ENCODE measurements at regions of chr3 and their contacts with region 1.

Region 1: DNA sequence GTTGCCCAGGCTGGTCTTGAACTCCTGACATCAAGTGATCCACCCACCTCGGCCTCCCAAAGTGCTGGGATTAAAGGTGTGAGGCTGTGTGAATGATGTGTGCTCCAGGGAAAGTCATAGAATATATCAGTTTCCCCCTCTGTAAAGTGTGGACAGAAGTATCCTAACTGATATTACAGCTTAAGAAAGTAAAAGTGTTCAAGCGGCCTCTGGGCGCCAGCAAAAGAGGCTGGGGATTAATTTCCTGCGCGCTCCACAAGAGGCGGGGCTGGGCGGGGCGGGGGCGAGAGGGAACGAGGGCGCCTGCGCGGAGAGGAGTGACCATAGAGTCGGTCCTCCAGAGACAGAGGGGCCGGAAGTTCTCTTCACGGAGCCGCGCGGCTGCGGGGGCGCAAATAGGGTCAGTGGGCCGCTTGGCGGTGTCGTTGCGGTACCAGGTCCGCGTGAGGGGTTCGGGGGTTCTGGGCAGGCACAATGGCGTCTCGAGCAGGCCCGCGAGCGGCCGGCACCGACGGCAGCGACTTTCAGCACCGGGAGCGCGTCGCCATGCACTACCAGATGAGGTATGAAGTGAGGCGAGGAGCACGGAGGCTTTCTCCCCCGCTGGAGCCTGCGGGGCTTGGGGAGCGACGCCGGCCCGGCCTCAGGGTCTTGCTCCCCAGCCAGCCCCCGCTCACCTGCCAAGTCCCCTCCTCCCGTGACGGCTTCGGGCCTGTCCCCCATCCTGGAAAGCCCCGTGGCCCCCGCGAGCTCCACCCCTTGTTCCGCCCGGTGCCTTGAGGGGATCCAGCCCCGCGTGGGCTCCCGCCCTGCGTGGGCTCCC is at the start of gene JAGN1:
- DNase-seq: peak; percentile 62
- ATAC-seq: peak; percentile 90
- H3K4me3 ChIP-seq: peak within 1 kb of the TSS; percentile 80
- H3K27ac ChIP-seq: peak within 1 kb of the TSS; percentile 98
- H3K4me1 ChIP-seq: no peaks in the 10 kb centered on the region
- H3K27me3 ChIP-seq: no peaks in the 10 kb centered on the region
- CTCF ChIP-seq: peak in 2 of 3 experiments; percentile 4 to 28; a peak in 1 of 6 replicates
- EP300 ChIP-seq: 0 out of 4 replicates have a peak, but pooled peaks of 1 of the 2 experiments have one; percentile 7
- POLR2A ChIP-seq: peak; percentile 95
- RAD21 ChIP-seq: no peak
- polyA plus RNA-seq, gene JAGN1: 26.2 to 28.6 TPM

Region 2: GRCh38 chr3:9878700-9879099 is 11.8 kb before region 1 on chr3:
- CTCF ChIA-PET with region 1: interaction called, 9 read pairs
- POLR2A ChIA-PET with region 1: interaction called, 35 read pairs
- RAD21 ChIA-PET with region 1: interaction called, 5 read pairs
- SMC1A ChIA-PET with region 1: interaction called, 8 read pairs
- in situ Hi-C with region 1: no loop called
- intact Hi-C with region 1: no loop called
- DNase-seq: no peak
- ATAC-seq: no peak; the same call in 1 of the 3 replicates
- H3K4me3 ChIP-seq: no peak overlapping the region
- H3K27ac ChIP-seq: no peak overlapping the region
- H3K4me1 ChIP-seq: peaks cover 5% of the 10 kb centered on the region
- H3K27me3 ChIP-seq: no peaks in the 10 kb centered on the region
- CTCF ChIP-seq: no peak
- EP300 ChIP-seq: no peak
- POLR2A ChIP-seq: no peak
- RAD21 ChIP-seq: no peak